T-cell (primary cell): ENCODE measurements at regions of chr1 and their contacts with region 1.

Region 1: DNA sequence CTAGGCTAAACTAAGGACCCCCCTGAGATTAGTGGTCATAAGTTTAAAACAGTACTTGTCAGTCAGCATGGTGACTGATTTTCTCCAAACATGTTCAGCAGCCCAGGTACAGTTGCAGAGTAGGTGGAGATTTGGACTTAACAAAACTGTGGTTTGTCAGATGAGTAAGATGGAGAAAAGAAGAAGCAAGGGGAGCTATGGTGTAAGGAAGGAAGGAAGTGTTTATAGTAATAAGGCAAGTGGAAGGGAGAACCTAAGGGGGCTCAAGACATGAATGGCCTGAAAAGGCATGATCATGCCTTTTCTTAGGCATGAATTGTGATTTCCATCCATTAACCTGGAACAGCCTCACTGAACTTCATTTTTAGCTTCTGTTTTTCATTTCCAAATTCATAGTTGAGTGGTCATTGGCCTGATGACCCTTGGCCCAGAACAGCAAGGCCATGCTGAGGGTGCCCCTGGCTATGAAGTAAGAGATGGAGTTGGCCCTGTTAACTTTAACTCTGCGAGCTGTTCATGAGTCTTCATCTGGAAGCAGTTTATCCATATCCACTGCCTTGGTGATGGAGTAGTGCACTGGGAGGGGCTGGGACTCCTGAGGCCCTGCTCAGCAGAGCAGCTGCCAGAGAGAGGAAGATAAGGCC is 60.7 kb downstream of the LRRC8D start:
- DNase-seq: no peak
- ATAC-seq: no peak
- H3K4me3 ChIP-seq: no peak overlapping the region
- H3K4me3 Mint-ChIP-seq: no peak overlapping the region
- H3K27ac ChIP-seq: no peak overlapping the region
- H3K27ac Mint-ChIP-seq: no peak overlapping the region
- H3K4me1 ChIP-seq: peaks cover 3 to 7% of the 10 kb centered on the region in 2 experiments
- H3K4me1 Mint-ChIP-seq: peaks cover 37 to 51% (median 39%) of the 10 kb centered on the region in 3 donors
- H3K27me3 ChIP-seq: no peaks in the 10 kb centered on the region
- H3K27me3 Mint-ChIP-seq: no peaks in the 10 kb centered on the region

Region 2: DNA sequence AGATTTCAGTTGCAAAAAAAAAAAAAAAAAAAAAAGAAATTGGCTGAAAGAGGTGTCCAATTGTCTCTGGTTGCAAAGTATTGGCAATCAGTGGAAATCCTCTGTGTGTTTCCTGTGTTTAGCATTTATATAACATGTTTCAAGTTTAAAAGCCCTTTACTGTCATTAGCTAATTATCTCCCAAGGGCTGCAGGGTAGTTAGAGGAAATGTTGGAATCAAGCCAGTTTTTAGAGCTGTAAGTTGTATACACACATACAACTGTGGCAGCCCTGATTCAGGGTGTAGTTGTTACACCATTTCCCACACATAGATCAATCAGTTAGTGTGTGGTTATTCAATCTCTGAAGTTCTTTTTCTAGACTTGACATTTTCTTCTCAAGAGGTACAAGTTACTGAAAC is 104.5 kb after region 1 on chr1:
- CTCF ChIA-PET with region 1: interaction called in 1 of 2 experiments, 15 read pairs
- POLR2A ChIA-PET with region 1: no interaction called
- DNase-seq: no peak
- ATAC-seq: no peak
- H3K4me3 ChIP-seq: no peak overlapping the region
- H3K4me3 Mint-ChIP-seq: no peak overlapping the region
- H3K27ac ChIP-seq: no peak overlapping the region
- H3K27ac Mint-ChIP-seq: no peak overlapping the region
- H3K4me1 ChIP-seq: no peaks in the 10 kb centered on the region
- H3K4me1 Mint-ChIP-seq: no peaks in the 10 kb centered on the region
- H3K27me3 ChIP-seq: peaks cover 0 to 6% of the 10 kb centered on the region in 2 experiments
- H3K27me3 Mint-ChIP-seq: peaks cover 0 to 6% of the 10 kb centered on the region in 2 donors

Region 3: GRCh38 chr1:91080650-91081049 is 1199.1 kb after region 1 on chr1:
- CTCF ChIA-PET with region 1: no interaction called
- POLR2A ChIA-PET with region 1: no interaction called
- DNase-seq: no peak
- ATAC-seq: no peak
- H3K4me3 ChIP-seq: no peak overlapping the region
- H3K4me3 Mint-ChIP-seq: no peak overlapping the region
- H3K27ac ChIP-seq: no peak overlapping the region
- H3K27ac Mint-ChIP-seq: no peak overlapping the region
- H3K4me1 ChIP-seq: no peaks in the 10 kb centered on the region
- H3K4me1 Mint-ChIP-seq: no peaks in the 10 kb centered on the region
- H3K27me3 ChIP-seq: no peaks in the 10 kb centered on the region
- H3K27me3 Mint-ChIP-seq: peaks cover 0 to 9% of the 10 kb centered on the region in 2 donors